Gastrocnemius medialis (tissue), 4 donors: ENCODE measurements at regions of chr7 and their contacts with region 1.

Region 1: GRCh38 chr7:42931834-42932651 is at the starts of genes MRPL32 and PSMA2:
- DNase-seq: peak; percentile 93 to 96
- ATAC-seq: peak; percentile 99 to 100
- H3K4me3 ChIP-seq: peak within 1 kb of the TSS; percentile 65 to 93 (median 87)
- H3K27ac ChIP-seq: peak within 1 kb of the TSS; percentile 88 to 96 (median 90)
- H3K4me1 ChIP-seq: peaks cover 28 to 36% of the 10 kb centered on the region in 2 donors
- H3K27me3 ChIP-seq: no peaks in the 10 kb centered on the region
- CTCF ChIP-seq: no peak
- POLR2A ChIP-seq: peak; percentile 78 to 87
- total RNA-seq, gene MRPL32: 42.6 to 59.2 (median 56.8) TPM
- total RNA-seq, gene PSMA2: 178 to 246 (median 209) TPM

Region 2: GRCh38 chr7:42911454-42912447 is 20.3 kb before region 1 on chr7 and contains the start of gene C7orf25:
- in situ Hi-C with region 1: no loop called
- intact Hi-C with region 1: loop called (anchors 1 kb)
- DNase-seq: peak; percentile 93 to 94
- ATAC-seq: peak; percentile 96 to 97
- H3K4me3 ChIP-seq: peak within 1 kb of the TSS; percentile 65 to 81 (median 71)
- H3K27ac ChIP-seq: peak within 1 kb of the TSS; percentile 68 to 86 (median 78)
- H3K4me1 ChIP-seq: peaks cover 10 to 16% of the 10 kb centered on the region in 2 donors
- H3K27me3 ChIP-seq: no peaks in the 10 kb centered on the region
- CTCF ChIP-seq: no peak
- POLR2A ChIP-seq: peak; percentile 38 to 47
- total RNA-seq, gene C7orf25: 4.6 to 13.5 (median 8.0) TPM

Region 3: DNA sequence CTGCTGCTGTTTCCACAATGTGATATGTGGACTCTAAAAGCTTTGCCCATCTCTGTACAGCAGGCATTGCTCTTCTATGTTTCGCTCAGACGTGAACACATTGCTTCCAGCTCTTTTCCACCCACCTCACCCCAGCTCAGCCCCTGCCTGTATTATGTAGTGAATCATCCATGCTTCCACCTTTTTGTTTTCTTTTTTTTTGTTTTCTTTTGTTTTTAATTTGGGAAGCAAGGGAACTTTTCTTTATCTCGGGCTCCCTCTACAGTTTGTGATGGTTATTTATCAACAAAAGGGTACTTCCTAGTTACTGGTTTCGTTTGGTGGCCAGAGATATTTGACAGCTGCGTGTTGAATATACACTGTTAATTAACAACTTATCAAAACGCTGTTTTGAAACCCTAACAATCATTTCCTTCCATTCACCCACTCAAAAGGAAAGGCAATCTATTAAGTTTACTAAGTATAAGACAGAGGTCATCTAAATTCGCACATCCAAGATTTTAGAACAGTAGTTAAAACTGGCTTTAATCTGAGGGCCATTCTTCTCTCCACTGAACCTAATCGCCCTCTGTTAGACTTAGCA is 523.0 kb after region 1 on chr7:
- in situ Hi-C with region 1: loop called in 1 of 4 experiments (anchors 25 kb)
- intact Hi-C with region 1: no loop called
- DNase-seq: no peak
- ATAC-seq: no peak
- H3K4me3 ChIP-seq: peak overlapping the region in 1 of 4 donors; percentile 22
- H3K27ac ChIP-seq: no peak overlapping the region
- H3K4me1 ChIP-seq: no peaks in the 10 kb centered on the region
- H3K27me3 ChIP-seq: no peaks in the 10 kb centered on the region
- CTCF ChIP-seq: peak in 1 of 5 experiments; percentile 13
- POLR2A ChIP-seq: no peak

Region 4: DNA sequence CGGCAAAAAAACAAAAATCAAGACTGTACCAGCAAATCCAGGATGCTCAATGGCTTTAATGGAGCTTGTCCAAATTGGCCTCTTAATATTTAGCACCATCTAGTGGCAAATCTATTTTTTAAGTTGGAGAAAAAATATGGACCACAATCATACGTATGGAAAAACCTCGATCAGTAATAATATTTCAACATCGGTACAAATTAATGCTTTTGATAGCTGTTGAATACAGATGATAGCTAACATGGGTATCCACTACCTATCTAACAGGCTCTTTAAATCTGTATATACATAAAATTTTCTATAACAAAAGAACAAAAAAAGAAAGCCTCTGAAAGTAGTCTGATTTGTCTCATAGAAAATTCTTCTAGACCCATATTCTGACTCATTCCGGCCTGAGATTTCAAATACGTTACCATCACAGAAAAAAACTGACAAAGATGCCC is 768.0 kb after region 1 on chr7:
- in situ Hi-C with region 1: loop called in 2 of 4 experiments (anchors 25 kb)
- intact Hi-C with region 1: no loop called
- DNase-seq: no peak
- ATAC-seq: peak; percentile 68 to 75
- H3K4me3 ChIP-seq: no peak overlapping the region
- H3K27ac ChIP-seq: no peak overlapping the region
- H3K4me1 ChIP-seq: peaks cover 13 to 16% of the 10 kb centered on the region in 2 donors
- H3K27me3 ChIP-seq: no peaks in the 10 kb centered on the region
- CTCF ChIP-seq: peak; percentile 48 to 78 (median 69)
- POLR2A ChIP-seq: no peak

Region 5: GRCh38 chr7:43729214-43729923 is 797.3 kb after region 1 on chr7 and contains the start of gene COA1:
- in situ Hi-C with region 1: loop called in 2 of 4 experiments (anchors 25 kb)
- intact Hi-C with region 1: loop called (anchors 10 kb)
- DNase-seq: peak; percentile 79 to 90
- ATAC-seq: peak; percentile 96 to 97
- H3K4me3 ChIP-seq: peak within 1 kb of the TSS; percentile 62 to 84 (median 73)
- H3K27ac ChIP-seq: peak within 1 kb of the TSS; percentile 80 to 94 (median 93)
- H3K4me1 ChIP-seq: peaks cover 35 to 36% of the 10 kb centered on the region in 2 donors
- H3K27me3 ChIP-seq: no peaks in the 10 kb centered on the region
- CTCF ChIP-seq: no peak
- POLR2A ChIP-seq: peak; percentile 54 to 65
- total RNA-seq, gene COA1: 34.9 to 55.2 (median 49.3) TPM

Region 6: DNA sequence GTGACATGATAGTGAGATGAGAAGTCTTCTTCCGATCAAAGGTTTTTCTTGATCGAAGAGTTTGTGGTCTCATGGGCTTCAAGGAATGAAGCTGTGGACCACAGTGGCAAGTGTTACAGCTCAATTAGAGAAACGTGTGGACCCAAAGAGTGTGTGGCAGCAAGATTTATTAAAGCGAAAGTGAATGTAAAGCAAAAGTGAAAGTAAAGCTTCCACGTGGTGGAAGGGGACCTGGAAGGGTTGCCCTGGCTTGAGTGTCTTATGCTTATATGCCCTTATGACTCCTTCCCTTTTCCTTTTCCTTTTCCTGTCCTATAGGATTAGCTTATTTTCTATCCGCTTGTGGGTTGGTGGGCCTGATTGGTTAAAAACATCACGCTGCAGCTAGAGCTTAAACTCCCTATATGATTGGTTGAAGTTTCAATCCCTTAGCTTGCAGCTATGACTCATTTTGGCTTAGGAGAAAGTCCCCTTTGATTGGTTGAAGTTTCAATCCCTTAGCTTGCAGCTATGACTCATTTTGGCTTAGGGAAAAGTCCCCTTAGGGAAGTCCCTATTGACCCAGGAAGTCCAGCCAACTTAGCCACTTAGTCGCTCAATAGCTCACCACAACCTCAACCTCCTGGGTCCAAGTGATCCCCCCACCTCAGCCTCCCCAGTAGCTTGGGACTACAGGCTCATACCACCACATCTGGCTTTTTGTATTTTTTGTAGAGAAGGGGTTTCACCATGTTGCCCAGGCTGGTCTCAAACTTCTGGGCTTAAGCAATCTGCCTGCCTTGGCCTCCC is 902.6 kb after region 1 on chr7:
- in situ Hi-C with region 1: loop called in 1 of 4 experiments (anchors 25 kb)
- intact Hi-C with region 1: no loop called
- DNase-seq: no peak
- ATAC-seq: no peak
- H3K4me3 ChIP-seq: peak overlapping the region; percentile 11 to 26 (median 20)
- H3K27ac ChIP-seq: no peak overlapping the region
- H3K4me1 ChIP-seq: no peaks in the 10 kb centered on the region
- H3K27me3 ChIP-seq: peaks cover 0 to 9% (median 0%) of the 10 kb centered on the region in 3 donors
- CTCF ChIP-seq: no peak
- POLR2A ChIP-seq: no peak